CD4-positive, alpha-beta T cell (primary cell): ENCODE measurements at regions of chr10 and their contacts with region 1.

Region 1: DNA sequence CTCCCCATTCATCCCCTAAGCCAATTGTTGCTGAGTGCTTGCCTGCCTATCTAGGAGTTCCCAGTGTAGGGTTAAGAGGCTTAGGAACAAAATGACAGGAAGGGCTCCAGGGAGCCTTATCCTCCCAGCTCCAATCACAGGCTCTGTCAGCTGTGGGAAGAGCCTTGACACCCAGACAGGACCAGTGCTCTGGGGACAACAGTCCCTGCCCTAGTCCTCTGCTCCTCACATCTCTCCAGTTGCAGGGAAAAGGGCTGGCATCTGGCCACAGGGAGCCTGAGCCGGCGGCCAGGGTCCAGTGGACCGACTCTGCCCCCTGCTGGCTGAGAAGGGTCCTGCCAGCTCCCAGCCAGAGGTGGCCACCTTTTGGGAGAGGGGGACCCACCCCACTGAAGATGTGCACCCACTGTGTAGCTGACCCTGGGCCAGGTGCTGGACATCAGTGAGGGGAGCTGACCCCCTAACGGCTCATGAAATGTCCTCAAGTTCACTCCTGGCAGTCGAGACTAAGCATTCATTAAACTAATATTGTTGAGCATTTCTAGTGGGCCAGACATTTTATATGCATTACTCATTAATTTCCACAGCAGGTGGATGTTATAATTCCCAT is 17.6 kb downstream of the DNAJB12 start:
- DNase-seq: peak in 13 of 14 experiments; percentile 49 to 81 (median 64)
- ATAC-seq: no peak
- H3K4me3 ChIP-seq: no peak overlapping the region
- H3K4me3 Mint-ChIP-seq: no peak overlapping the region
- H3K27ac ChIP-seq: no peak overlapping the region
- H3K27ac Mint-ChIP-seq: peak overlapping the region; percentile 94
- H3K4me1 ChIP-seq: peaks cover 65% of the 10 kb centered on the region
- H3K4me1 Mint-ChIP-seq: peaks cover 65% of the 10 kb centered on the region
- H3K27me3 ChIP-seq: no peaks in the 10 kb centered on the region
- H3K27me3 Mint-ChIP-seq: no peaks in the 10 kb centered on the region
- CTCF ChIP-seq: peak; percentile 99

Region 2: DNA sequence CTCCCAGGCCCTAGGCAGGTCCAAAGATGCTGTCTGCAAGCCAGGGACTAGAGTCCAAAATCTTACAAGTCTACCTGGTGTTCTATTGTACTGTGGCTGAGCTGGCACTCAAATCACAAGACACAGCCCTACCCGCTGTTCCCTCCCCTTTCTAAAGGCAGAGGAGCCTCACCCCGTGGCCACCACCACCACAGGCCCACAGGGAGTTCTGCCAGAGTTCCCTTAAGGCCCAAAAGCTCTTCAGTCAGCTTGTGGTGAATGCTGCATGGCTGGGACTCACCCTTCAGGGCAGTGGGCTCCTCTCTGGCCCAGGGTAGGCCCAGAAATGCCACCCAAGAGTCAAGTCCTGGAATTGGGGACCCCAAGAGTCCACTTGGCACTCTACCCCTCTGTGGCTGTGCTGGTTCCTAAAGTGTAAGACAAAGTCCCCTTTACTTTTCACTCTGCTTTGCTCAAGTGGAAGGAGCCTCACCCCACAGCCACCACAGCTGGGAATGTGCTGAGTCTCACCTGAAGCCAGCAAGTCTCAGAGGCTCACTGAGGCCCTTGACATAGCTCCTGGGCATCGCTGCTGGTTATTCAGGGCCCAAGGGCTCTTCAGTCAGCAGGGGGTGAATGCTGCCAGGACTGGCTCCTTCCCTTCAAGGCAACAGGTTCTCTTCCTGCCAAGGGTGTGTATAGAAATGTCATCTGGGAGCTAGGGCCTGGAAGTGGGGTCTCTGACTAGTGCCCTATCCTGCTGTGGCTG is 437.3 kb before region 1 on chr10:
- CTCF ChIA-PET with region 1: interaction called, 3 read pairs
- POLR2A ChIA-PET with region 1: no interaction called
- intact Hi-C with region 1: loop called (anchors 1 to 2 kb)
- DNase-seq: no peak
- ATAC-seq: no peak
- H3K4me3 ChIP-seq: no peak overlapping the region
- H3K4me3 Mint-ChIP-seq: no peak overlapping the region
- H3K27ac ChIP-seq: no peak overlapping the region
- H3K27ac Mint-ChIP-seq: no peak overlapping the region
- H3K4me1 ChIP-seq: peaks cover 6% of the 10 kb centered on the region
- H3K4me1 Mint-ChIP-seq: peaks cover 15% of the 10 kb centered on the region
- H3K27me3 ChIP-seq: no peaks in the 10 kb centered on the region
- H3K27me3 Mint-ChIP-seq: no peaks in the 10 kb centered on the region
- CTCF ChIP-seq: no peak

Region 3: GRCh38 chr10:72026278-72027111 is 310.6 kb before region 1 on chr10:
- CTCF ChIA-PET with region 1: no interaction called
- POLR2A ChIA-PET with region 1: no interaction called
- intact Hi-C with region 1: no loop called
- DNase-seq: no peak
- ATAC-seq: no peak
- H3K4me3 ChIP-seq: no peak overlapping the region
- H3K4me3 Mint-ChIP-seq: no peak overlapping the region
- H3K27ac ChIP-seq: no peak overlapping the region
- H3K27ac Mint-ChIP-seq: no peak overlapping the region
- H3K4me1 ChIP-seq: no peaks in the 10 kb centered on the region
- H3K4me1 Mint-ChIP-seq: no peaks in the 10 kb centered on the region
- H3K27me3 ChIP-seq: peaks cover 0 to 3% of the 10 kb centered on the region in 2 experiments
- H3K27me3 Mint-ChIP-seq: peaks cover 12% of the 10 kb centered on the region
- CTCF ChIP-seq: no peak

Region 4: GRCh38 chr10:72048450-72049124 is 288.5 kb before region 1 on chr10:
- CTCF ChIA-PET with region 1: interaction called, 11 read pairs
- POLR2A ChIA-PET with region 1: interaction called, 4 read pairs
- intact Hi-C with region 1: loop called (anchors 2 kb)
- DNase-seq: peak; percentile 82 to 94 (median 90)
- ATAC-seq: peak; percentile 99
- H3K4me3 ChIP-seq: no peak overlapping the region
- H3K4me3 Mint-ChIP-seq: no peak overlapping the region
- H3K27ac ChIP-seq: no peak overlapping the region
- H3K27ac Mint-ChIP-seq: no peak overlapping the region
- H3K4me1 ChIP-seq: no peaks in the 10 kb centered on the region
- H3K4me1 Mint-ChIP-seq: peaks cover 9% of the 10 kb centered on the region
- H3K27me3 ChIP-seq: no peaks in the 10 kb centered on the region
- H3K27me3 Mint-ChIP-seq: no peaks in the 10 kb centered on the region
- CTCF ChIP-seq: peak; percentile 100

Region 5: DNA sequence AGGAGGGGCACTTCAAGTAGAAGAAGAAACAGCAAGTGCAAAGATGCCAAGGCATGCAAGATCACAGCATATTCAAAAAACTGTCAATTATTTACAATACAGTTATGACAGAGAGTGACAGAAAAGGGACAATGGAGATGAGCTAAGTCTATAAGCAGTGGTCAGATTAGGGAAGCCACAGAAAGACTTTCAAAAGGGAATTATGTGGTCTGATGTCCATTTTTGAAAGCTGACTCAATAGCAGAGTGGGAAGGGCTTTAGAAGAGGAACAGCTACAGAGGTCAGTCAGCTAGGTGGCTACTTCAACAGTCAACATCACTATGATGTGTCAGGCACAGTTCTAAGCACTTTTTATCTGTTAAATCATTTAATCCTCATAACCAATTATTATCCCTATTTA is 203.6 kb before region 1 on chr10:
- CTCF ChIA-PET with region 1: interaction called, 30 read pairs
- POLR2A ChIA-PET with region 1: interaction called, 3 read pairs
- intact Hi-C with region 1: loop called in 1 of 2 experiments (anchors 2 kb)
- DNase-seq: peak in 2 of 14 experiments; percentile 30 to 33
- ATAC-seq: no peak
- H3K4me3 ChIP-seq: no peak overlapping the region
- H3K4me3 Mint-ChIP-seq: no peak overlapping the region
- H3K27ac ChIP-seq: no peak overlapping the region
- H3K27ac Mint-ChIP-seq: peak overlapping the region; percentile 45
- H3K4me1 ChIP-seq: peaks cover 21% of the 10 kb centered on the region
- H3K4me1 Mint-ChIP-seq: peaks cover 44% of the 10 kb centered on the region
- H3K27me3 ChIP-seq: no peaks in the 10 kb centered on the region
- H3K27me3 Mint-ChIP-seq: no peaks in the 10 kb centered on the region
- CTCF ChIP-seq: no peak

Region 6: GRCh38 chr10:72200883-72201282 is 136.2 kb before region 1 on chr10:
- CTCF ChIA-PET with region 1: no interaction called
- POLR2A ChIA-PET with region 1: no interaction called
- intact Hi-C with region 1: no loop called
- DNase-seq: no peak
- ATAC-seq: no peak
- H3K4me3 ChIP-seq: no peak overlapping the region
- H3K4me3 Mint-ChIP-seq: no peak overlapping the region
- H3K27ac ChIP-seq: no peak overlapping the region
- H3K27ac Mint-ChIP-seq: no peak overlapping the region
- H3K4me1 ChIP-seq: no peaks in the 10 kb centered on the region
- H3K4me1 Mint-ChIP-seq: peaks cover 4% of the 10 kb centered on the region
- H3K27me3 ChIP-seq: no peaks in the 10 kb centered on the region
- H3K27me3 Mint-ChIP-seq: no peaks in the 10 kb centered on the region
- CTCF ChIP-seq: no peak

Region 7: GRCh38 chr10:72229261-72230251 is 107.6 kb before region 1 on chr10:
- CTCF ChIA-PET with region 1: interaction called, 12 read pairs
- POLR2A ChIA-PET with region 1: no interaction called
- intact Hi-C with region 1: loop called in 1 of 2 experiments (anchors 2 kb)
- DNase-seq: no peak
- ATAC-seq: no peak
- H3K4me3 ChIP-seq: no peak overlapping the region
- H3K4me3 Mint-ChIP-seq: no peak overlapping the region
- H3K27ac ChIP-seq: peak overlapping the region in 1 of 2 donors; percentile 4
- H3K27ac Mint-ChIP-seq: peak overlapping the region; percentile 74
- H3K4me1 ChIP-seq: peaks cover 20% of the 10 kb centered on the region
- H3K4me1 Mint-ChIP-seq: peaks cover 47% of the 10 kb centered on the region
- H3K27me3 ChIP-seq: no peaks in the 10 kb centered on the region
- H3K27me3 Mint-ChIP-seq: no peaks in the 10 kb centered on the region
- CTCF ChIP-seq: no peak

Region 8: DNA sequence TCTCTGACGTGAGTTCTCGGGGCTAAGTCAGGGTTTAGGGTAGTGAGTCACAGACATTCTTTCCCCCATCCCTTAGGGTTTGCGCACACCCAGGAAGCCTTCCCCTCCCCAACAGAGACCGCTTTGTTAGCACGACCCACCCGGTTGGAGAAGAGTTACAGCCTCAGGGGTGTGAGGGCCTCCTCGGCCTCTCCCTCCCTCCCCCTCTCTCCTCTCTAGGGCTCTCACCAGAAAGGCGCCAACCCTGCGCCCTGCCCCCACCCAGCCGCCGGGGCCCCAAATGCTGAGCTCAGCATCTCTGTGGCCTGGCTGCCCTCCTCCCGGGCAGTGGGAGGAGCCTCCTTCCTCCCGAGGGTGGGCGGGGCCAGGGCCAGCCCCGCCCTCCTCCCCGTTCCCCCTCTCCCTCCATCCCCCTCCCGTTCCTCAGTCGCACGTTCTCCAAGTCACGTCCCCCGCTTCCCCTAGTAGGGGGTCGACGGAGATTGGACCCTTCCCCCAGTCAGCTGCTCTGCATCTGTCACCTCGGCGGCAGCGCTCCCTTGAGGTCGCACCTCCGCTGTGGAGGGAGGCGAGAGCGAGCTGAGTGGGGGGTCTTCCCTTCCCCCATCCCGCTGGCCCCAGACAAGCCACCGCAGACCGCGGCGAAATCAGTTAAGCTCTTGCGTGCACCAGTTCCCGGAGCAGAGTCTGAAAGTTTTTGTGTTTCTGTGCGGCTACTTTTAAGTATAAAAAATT is 76.4 kb before region 1 on chr10:
- CTCF ChIA-PET with region 1: interaction called, 19 read pairs
- POLR2A ChIA-PET with region 1: interaction called, 17 read pairs
- intact Hi-C with region 1: no loop called
- DNase-seq: peak; percentile 64 to 91 (median 77)
- ATAC-seq: peak; percentile 76
- H3K4me3 ChIP-seq: peak overlapping the region; percentile 77
- H3K4me3 Mint-ChIP-seq: peak overlapping the region; percentile 84
- H3K27ac ChIP-seq: peak overlapping the region; percentile 68 to 80
- H3K27ac Mint-ChIP-seq: peak overlapping the region; percentile 85
- H3K4me1 ChIP-seq: peaks cover 80% of the 10 kb centered on the region
- H3K4me1 Mint-ChIP-seq: peaks cover 72% of the 10 kb centered on the region
- H3K27me3 ChIP-seq: no peaks in the 10 kb centered on the region
- H3K27me3 Mint-ChIP-seq: no peaks in the 10 kb centered on the region
- CTCF ChIP-seq: no peak

Region 9: GRCh38 chr10:72407927-72408600 is 70.9 kb after region 1 on chr10:
- CTCF ChIA-PET with region 1: no interaction called
- POLR2A ChIA-PET with region 1: no interaction called
- intact Hi-C with region 1: no loop called
- DNase-seq: no peak
- ATAC-seq: no peak
- H3K4me3 ChIP-seq: no peak overlapping the region
- H3K4me3 Mint-ChIP-seq: no peak overlapping the region
- H3K27ac ChIP-seq: no peak overlapping the region
- H3K27ac Mint-ChIP-seq: no peak overlapping the region
- H3K4me1 ChIP-seq: no peaks in the 10 kb centered on the region
- H3K4me1 Mint-ChIP-seq: no peaks in the 10 kb centered on the region
- H3K27me3 ChIP-seq: no peaks in the 10 kb centered on the region
- H3K27me3 Mint-ChIP-seq: no peaks in the 10 kb centered on the region
- CTCF ChIP-seq: no peak

Region 10: GRCh38 chr10:72455889-72456595 is 118.9 kb after region 1 on chr10:
- CTCF ChIA-PET with region 1: no interaction called
- POLR2A ChIA-PET with region 1: no interaction called
- intact Hi-C with region 1: no loop called
- DNase-seq: no peak
- ATAC-seq: no peak
- H3K4me3 ChIP-seq: no peak overlapping the region
- H3K4me3 Mint-ChIP-seq: no peak overlapping the region
- H3K27ac ChIP-seq: no peak overlapping the region
- H3K27ac Mint-ChIP-seq: no peak overlapping the region
- H3K4me1 ChIP-seq: no peaks in the 10 kb centered on the region
- H3K4me1 Mint-ChIP-seq: no peaks in the 10 kb centered on the region
- H3K27me3 ChIP-seq: no peaks in the 10 kb centered on the region
- H3K27me3 Mint-ChIP-seq: no peaks in the 10 kb centered on the region
- CTCF ChIP-seq: no peak